Vagina (tissue), 2 donors: ENCODE measurements at regions of chr22 and their contacts with region 1.

Region 1: GRCh38 chr22:38868886-38869381 is 3.1 kb downstream of the CBX6 start:
- DNase-seq: peak; percentile 81 to 85
- H3K4me3 ChIP-seq: no peak overlapping the region
- H3K27ac ChIP-seq: no peak overlapping the region
- H3K4me1 ChIP-seq: peaks cover 75% of the 10 kb centered on the region
- H3K27me3 ChIP-seq: no peaks in the 10 kb centered on the region
- CTCF ChIP-seq: peak; percentile 48 to 87 (median 79)
- POLR2A ChIP-seq: no peak

Region 2: GRCh38 chr22:38766076-38766777 is 102.7 kb before region 1 on chr22:
- intact Hi-C with region 1: loop called (anchors 10 kb)
- DNase-seq: no peak
- H3K4me3 ChIP-seq: no peak overlapping the region
- H3K27ac ChIP-seq: no peak overlapping the region
- H3K4me1 ChIP-seq: no peaks in the 10 kb centered on the region
- H3K27me3 ChIP-seq: no peaks in the 10 kb centered on the region
- CTCF ChIP-seq: peak; percentile 30 to 37 (median 31)
- POLR2A ChIP-seq: no peak

Region 3: DNA sequence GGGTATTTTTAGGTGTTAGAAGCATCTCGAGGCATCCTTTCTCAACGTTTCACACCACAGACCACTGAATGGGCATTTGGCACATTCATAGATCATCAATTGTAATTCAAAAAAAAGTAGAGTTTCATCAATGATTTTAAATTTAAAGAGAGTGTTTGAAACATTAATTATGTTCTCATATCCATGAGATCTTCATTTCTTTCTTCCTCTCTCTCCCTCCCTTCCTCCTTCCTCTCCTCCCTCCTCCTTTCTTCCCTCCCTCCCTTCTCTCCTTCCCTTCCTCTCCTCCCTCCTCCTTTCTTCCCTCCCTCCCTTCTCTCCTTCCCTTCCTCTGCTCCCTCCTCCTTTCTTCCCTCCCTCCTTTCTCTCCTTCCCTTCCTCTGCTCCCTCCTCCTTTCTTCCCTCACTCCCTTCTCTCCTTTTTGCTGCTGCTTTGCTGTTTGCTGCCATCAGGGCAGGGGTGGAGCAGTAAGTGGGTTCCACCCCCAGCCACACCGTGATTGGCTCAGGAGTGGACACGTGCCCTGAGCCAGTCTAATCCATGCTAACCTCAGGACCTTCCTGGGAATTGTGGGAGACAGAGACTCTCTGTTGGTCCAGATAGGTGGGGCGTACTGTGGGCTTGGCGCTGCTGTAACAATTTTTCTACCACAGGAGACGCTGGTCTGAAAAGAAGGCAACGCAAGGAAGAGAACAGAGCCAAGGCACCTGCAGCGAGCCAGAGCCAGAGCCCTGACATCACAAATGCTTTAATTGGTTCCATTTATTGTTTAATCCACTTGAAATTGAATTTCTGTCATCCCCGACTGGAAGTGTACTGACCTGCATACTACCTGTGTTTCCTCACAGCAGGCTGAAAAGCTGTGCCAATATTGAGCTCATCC is 54.8 kb after region 1 on chr22:
- intact Hi-C with region 1: loop called (anchors 5 kb)
- DNase-seq: no peak
- H3K4me3 ChIP-seq: peak overlapping the region; percentile 7 to 11
- H3K27ac ChIP-seq: peak overlapping the region; percentile 74
- H3K4me1 ChIP-seq: peaks cover 47% of the 10 kb centered on the region
- H3K27me3 ChIP-seq: no peaks in the 10 kb centered on the region
- CTCF ChIP-seq: no peak
- POLR2A ChIP-seq: no peak

Region 4: GRCh38 chr22:39003165-39003638 is 134.3 kb after region 1 on chr22:
- intact Hi-C with region 1: loop called (anchors 5 kb)
- DNase-seq: peak in 1 of 2 donors; percentile 96
- H3K4me3 ChIP-seq: no peak overlapping the region
- H3K27ac ChIP-seq: no peak overlapping the region
- H3K4me1 ChIP-seq: peaks cover 4% of the 10 kb centered on the region
- H3K27me3 ChIP-seq: no peaks in the 10 kb centered on the region
- CTCF ChIP-seq: peak; percentile 56 to 73 (median 57)
- POLR2A ChIP-seq: no peak

Region 5: DNA sequence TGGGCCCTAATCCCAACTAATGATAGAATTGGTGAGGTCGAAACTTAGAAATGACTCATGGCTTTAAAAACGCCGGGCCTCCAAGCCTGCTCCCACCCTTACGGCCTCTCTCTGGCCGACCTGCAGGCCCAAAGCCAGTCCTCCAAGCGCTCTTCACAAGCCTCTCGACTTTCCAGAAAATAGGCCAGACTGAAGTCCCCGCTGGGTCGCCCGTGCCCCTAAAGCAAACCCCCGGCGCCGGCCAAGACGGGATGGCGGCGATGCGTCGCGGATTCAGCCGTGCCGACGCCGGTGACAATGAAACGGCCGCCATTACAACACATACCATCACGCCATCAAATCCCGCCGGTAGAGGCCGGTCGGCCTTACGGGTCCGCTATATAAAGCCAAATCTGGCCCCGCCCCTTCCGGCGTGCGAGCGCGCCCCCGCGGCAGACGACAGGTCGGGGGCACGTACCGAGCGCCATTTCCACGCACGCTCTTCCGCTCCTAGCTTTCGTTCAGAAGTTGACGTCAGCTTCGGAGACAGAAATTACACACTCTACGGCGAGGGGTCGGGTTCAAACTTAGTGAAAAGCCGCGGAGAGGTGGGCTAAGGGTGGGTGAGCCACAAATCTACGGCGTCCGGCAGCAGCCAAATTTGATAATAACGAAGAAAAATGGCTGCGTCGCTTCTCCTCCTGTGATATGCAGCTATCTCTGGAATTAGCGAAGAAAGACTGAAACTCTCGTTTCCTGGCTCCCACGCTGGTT is 450.5 kb after region 1 on chr22 and contains the start of gene RPL3:
- intact Hi-C with region 1: loop called (anchors 10 kb)
- DNase-seq: peak in 1 of 2 donors; percentile 98
- H3K4me3 ChIP-seq: peak within 1 kb of the TSS; percentile 82 to 90
- H3K27ac ChIP-seq: peak within 1 kb of the TSS; percentile 98
- H3K4me1 ChIP-seq: peaks cover 48% of the 10 kb centered on the region
- H3K27me3 ChIP-seq: no peaks in the 10 kb centered on the region
- CTCF ChIP-seq: peak in 2 of 3 experiments; percentile 16
- POLR2A ChIP-seq: peak in 1 of 2 donors; percentile 80
- total RNA-seq, gene RPL3: 2,613 TPM